ENCODE measurements at regions of chr5 and their contacts with region 1.

Region 1: DNA sequence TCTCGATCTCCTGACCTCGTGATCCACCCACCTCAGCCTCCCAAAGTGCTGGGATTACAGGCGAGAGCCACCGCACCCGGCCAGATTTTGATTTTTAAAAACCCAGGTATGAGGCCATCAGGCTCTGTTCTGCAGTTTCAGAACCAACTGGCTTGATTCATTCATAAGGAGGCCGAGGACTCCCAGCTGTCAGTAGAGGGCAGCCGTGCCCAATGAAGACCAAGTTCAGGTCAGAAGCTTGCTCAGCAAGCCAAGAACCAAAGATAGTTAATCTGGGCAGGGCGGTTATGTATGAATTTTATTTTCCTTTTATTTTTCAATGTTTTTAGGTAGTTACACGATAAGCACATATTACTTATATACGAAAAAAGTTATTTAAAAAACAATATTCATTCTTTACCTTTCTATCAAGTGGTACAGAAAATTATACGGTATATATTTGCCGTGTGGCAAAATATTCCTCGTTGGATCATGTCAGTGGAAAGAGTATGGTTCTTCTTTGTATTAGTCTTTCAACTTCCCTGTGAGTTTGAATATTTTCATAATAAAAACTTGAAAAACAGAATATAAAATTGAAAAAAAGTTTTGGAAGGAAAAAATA is 18.0 kb downstream of the MGAT1 start:
- H3K4me3 ChIP-seq: no peak overlapping the region
- H3K27ac ChIP-seq: no peak overlapping the region
- H3K4me1 ChIP-seq: no peaks in the 10 kb centered on the region
- CTCF ChIP-seq: peak; percentile 49

Region 2: GRCh38 chr5:180769821-180770220 is 14.8 kb before region 1 on chr5:
- CTCF ChIA-PET with region 1: interaction called, 10 read pairs
- POLR2A ChIA-PET with region 1: no interaction called
- H3K4me3 ChIP-seq: no peak overlapping the region
- H3K27ac ChIP-seq: no peak overlapping the region
- H3K4me1 ChIP-seq: no peaks in the 10 kb centered on the region
- CTCF ChIP-seq: no peak

Region 3: GRCh38 chr5:180802325-180803180 is 18.0 kb after region 1 on chr5 and contains the start of gene MGAT1:
- CTCF ChIA-PET with region 1: interaction called, 26 read pairs
- POLR2A ChIA-PET with region 1: no interaction called
- H3K4me3 ChIP-seq: peak within 1 kb of the TSS; percentile 90
- H3K27ac ChIP-seq: peak within 1 kb of the TSS; percentile 90
- H3K4me1 ChIP-seq: peaks cover 12% of the 10 kb centered on the region
- CTCF ChIP-seq: 0 out of 2 replicates have a peak, but pooled peaks have one; percentile 9

Region 4: DNA sequence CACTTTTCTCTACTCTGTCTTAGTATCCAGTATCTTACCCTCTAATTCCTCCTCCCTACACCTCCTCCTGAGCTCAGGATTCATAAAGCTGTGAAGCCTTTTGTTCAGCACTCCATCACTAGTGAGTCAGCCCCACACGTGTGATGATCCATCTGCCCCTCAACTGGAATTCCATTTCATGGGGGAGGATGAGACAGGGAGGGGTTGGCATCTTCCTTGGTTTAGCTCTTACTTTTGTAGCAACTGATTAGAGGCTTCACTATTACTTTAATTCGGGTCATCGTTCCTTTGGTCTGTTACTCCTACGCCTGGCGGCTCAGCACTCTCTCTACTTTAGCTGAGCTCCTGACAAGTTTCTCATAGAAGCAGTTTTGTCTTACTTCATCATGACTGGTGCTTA is 126.1 kb after region 1 on chr5:
- CTCF ChIA-PET with region 1: no interaction called
- POLR2A ChIA-PET with region 1: no interaction called
- H3K4me3 ChIP-seq: no peak overlapping the region
- H3K27ac ChIP-seq: no peak overlapping the region
- H3K4me1 ChIP-seq: no peaks in the 10 kb centered on the region
- CTCF ChIP-seq: no peak

Measured in HEK293 (cell line).